GM12878 (cell line): ENCODE measurements at regions of chr16 and their contacts with region 1.

Region 1: GRCh38 chr16:84617791-84618580 is at the start of gene COTL1:
- DNase-seq: no peak
- ATAC-seq: peak; percentile 76
- H3K4me3 ChIP-seq: peak within 1 kb of the TSS; percentile 99
- H3K27ac ChIP-seq: peak within 1 kb of the TSS; percentile 78
- H3K4me1 ChIP-seq: peaks cover 42% of the 10 kb centered on the region
- H3K27me3 ChIP-seq: no peaks in the 10 kb centered on the region
- CTCF ChIP-seq: no peak
- EP300 ChIP-seq: no peak
- POLR2A ChIP-seq: peak; percentile 85
- RAD21 ChIP-seq: no peak
- polyA plus RNA-seq, gene COTL1: 140 to 235 TPM

Region 2: DNA sequence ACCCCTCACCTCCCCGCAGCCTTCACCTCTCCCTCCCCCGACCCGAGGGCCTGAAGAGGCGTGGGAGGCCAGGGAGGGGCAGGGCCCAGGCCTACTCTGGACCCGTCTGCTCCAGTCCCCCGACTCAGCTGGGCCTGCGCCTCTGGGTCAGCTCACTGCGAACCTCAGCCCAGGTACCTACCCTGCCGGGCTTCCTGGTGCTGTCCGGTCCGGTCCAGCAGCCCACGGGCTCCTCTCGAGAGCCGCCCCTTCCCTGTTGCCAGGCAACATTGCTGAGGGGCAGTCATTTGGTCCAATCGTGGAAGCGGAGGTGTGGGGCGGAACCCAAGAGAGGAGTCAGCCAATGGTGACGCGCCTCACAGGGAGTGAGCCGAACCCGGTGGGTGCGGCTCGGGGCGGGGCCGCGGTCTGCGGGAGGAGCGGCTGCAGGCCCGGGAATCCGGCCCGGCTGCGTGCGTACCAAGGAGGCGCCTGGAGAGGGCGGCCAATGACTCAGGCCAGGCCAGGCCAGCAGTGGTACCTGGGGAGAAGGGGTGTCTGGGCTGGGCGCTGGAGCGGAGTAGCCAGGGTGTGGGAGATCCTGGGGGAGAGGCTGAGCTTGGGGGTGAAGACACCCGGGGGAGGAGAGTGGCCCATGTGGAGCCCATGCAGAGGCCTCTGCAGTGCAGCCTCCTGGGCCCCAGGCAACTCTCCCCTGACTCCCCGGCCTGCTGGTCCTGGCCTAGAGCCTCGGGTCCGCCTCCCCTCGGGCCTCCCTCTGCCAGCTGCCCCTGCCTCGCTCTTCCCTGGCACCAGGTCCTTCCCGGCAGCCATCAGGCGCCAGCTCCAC is 113.4 kb before region 1 on chr16 and contains the start of gene MEAK7:
- CTCF ChIA-PET with region 1: interaction called, 299 read pairs
- POLR2A ChIA-PET with region 1: interaction called, 5 read pairs
- RAD21 ChIA-PET with region 1: interaction called, 43 read pairs
- SMC1A ChIA-PET with region 1: interaction called, 47 read pairs
- in situ Hi-C with region 1: no loop called
- intact Hi-C with region 1: no loop called
- DNase-seq: peak; percentile 86
- ATAC-seq: peak; percentile 91
- H3K4me3 ChIP-seq: peak within 1 kb of the TSS; percentile 88
- H3K27ac ChIP-seq: peak within 1 kb of the TSS; percentile 82
- H3K4me1 ChIP-seq: peaks cover 50% of the 10 kb centered on the region
- H3K27me3 ChIP-seq: no peaks in the 10 kb centered on the region
- CTCF ChIP-seq: peak in 1 of 3 experiments; percentile 13; a peak in 1 of 6 replicates
- EP300 ChIP-seq: no peak
- POLR2A ChIP-seq: peak; percentile 78
- RAD21 ChIP-seq: no peak
- polyA plus RNA-seq, gene MEAK7: 1.4 to 1.5 TPM

Region 3: DNA sequence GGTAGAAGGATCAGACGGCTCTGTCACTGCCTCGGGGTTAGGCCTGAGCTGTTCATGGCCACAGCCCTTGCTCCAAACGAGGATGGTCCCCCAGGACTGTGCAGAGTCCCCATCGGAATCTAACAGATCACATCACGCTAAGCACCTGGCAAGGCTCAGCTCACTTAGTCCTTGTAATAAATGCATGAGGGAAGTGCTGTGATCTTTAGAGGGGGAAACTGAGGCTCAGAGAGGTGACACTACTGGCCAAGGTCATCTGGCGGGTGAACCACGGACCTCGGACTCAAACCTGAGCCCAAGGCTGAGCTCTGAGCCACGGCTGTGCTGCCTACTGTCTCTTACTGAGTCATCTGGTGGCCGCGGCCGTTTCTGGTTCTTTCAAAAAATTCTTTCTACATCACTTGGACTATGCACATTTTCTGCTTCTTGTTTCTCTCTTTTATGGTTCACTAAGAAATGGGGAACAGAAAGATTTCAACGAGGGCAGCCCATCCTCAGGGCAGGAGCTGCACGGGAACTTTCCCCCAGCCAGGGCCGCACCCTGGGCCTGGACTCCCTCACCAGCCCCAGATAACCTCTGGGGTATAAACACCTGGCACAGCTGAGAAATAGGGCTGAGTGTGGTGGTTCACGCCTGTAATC is 55.7 kb before region 1 on chr16:
- CTCF ChIA-PET with region 1: interaction called, 11 read pairs
- POLR2A ChIA-PET with region 1: interaction called, 3 read pairs
- RAD21 ChIA-PET with region 1: interaction called, 6 read pairs
- SMC1A ChIA-PET with region 1: interaction called, 5 read pairs
- in situ Hi-C with region 1: no loop called
- intact Hi-C with region 1: no loop called
- DNase-seq: peak; percentile 64
- ATAC-seq: peak; percentile 92
- H3K4me3 ChIP-seq: no peak overlapping the region
- H3K27ac ChIP-seq: peak overlapping the region; percentile 66
- H3K4me1 ChIP-seq: peaks cover 21% of the 10 kb centered on the region
- H3K27me3 ChIP-seq: no peaks in the 10 kb centered on the region
- CTCF ChIP-seq: no peak
- EP300 ChIP-seq: peak in 1 of 2 experiments; percentile 6; a peak in 1 of 4 replicates
- POLR2A ChIP-seq: no peak; the same call in 1 of the 2 replicates
- RAD21 ChIP-seq: no peak

Region 4: DNA sequence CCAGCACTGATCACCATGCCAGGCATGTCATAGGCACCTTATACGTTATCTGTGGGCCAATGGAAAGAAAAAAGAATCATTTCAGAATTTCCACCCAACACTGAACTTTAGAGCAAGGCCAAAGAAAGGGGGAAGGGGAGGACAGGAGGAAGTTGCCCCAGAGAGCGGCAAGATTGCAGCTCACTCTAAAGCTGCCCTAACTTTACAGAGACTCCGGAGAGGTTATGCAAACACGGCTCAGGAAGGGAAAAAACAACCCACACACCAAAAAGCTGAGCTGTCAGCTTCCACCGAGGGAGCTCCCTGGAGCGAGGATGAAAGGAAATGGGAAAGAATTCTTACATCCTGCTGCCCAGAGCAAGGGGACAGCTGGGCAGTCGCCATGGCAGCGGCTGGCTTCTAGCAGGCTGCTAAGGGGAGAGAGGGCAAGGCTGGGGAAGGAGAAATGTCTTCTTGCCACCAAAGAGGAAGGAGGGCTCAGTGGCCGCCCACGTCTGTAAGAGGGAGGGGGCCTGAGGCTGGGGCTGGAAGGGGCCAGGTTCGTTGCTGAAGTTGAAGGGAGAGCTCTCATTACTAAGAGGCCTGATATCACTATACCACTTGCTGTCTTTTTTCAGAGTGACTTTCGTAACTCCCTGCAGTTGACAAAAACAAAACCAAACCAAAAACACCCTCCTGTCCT is 18.3 kb before region 1 on chr16:
- CTCF ChIA-PET with region 1: interaction called, 42 read pairs
- POLR2A ChIA-PET with region 1: interaction called, 214 read pairs
- RAD21 ChIA-PET with region 1: interaction called, 224 read pairs
- SMC1A ChIA-PET with region 1: interaction called, 229 read pairs
- in situ Hi-C with region 1: no loop called
- intact Hi-C with region 1: loop called (anchors 1 kb)
- DNase-seq: no peak
- ATAC-seq: peak; percentile 35
- H3K4me3 ChIP-seq: peak overlapping the region; percentile 69
- H3K27ac ChIP-seq: peak overlapping the region; percentile 100
- H3K4me1 ChIP-seq: peaks cover 79% of the 10 kb centered on the region
- H3K27me3 ChIP-seq: no peaks in the 10 kb centered on the region
- CTCF ChIP-seq: no peak
- EP300 ChIP-seq: peak in 1 of 2 experiments; percentile 18; a peak in 1 of 4 replicates
- POLR2A ChIP-seq: peak; percentile 64
- RAD21 ChIP-seq: no peak

Region 5: GRCh38 chr16:84672276-84673202 is 54.6 kb after region 1 on chr16:
- CTCF ChIA-PET with region 1: interaction called, 12 read pairs
- POLR2A ChIA-PET with region 1: no interaction called
- RAD21 ChIA-PET with region 1: interaction called, 9 read pairs
- SMC1A ChIA-PET with region 1: interaction called, 6 read pairs
- in situ Hi-C with region 1: no loop called
- intact Hi-C with region 1: no loop called
- DNase-seq: no peak
- ATAC-seq: peak; percentile 98
- H3K4me3 ChIP-seq: no peak overlapping the region
- H3K27ac ChIP-seq: no peak overlapping the region
- H3K4me1 ChIP-seq: no peaks in the 10 kb centered on the region
- H3K27me3 ChIP-seq: no peaks in the 10 kb centered on the region
- CTCF ChIP-seq: peak; percentile 86 to 95 (median 93)
- EP300 ChIP-seq: no peak
- POLR2A ChIP-seq: no peak
- RAD21 ChIP-seq: peak; percentile 74

Region 6: GRCh38 chr16:84754353-84754856 is 136.4 kb after region 1 on chr16:
- CTCF ChIA-PET with region 1: interaction called, 35 read pairs
- POLR2A ChIA-PET with region 1: interaction called, 3 read pairs
- RAD21 ChIA-PET with region 1: interaction called, 6 read pairs
- SMC1A ChIA-PET with region 1: interaction called, 24 read pairs
- in situ Hi-C with region 1: no loop called
- intact Hi-C with region 1: no loop called
- DNase-seq: peak; percentile 78
- ATAC-seq: peak; percentile 82
- H3K4me3 ChIP-seq: no peak overlapping the region; the same call in 1 of the 2 replicates
- H3K27ac ChIP-seq: peak overlapping the region; percentile 56
- H3K4me1 ChIP-seq: peaks cover 54% of the 10 kb centered on the region
- H3K27me3 ChIP-seq: no peaks in the 10 kb centered on the region
- CTCF ChIP-seq: peak; percentile 70 to 85 (median 80)
- EP300 ChIP-seq: no peak
- POLR2A ChIP-seq: no peak
- RAD21 ChIP-seq: peak; percentile 81

Region 7: GRCh38 chr16:85554112-85554813 is 936.3 kb after region 1 on chr16:
- CTCF ChIA-PET with region 1: no interaction called
- POLR2A ChIA-PET with region 1: no interaction called
- RAD21 ChIA-PET with region 1: no interaction called
- SMC1A ChIA-PET with region 1: no interaction called
- in situ Hi-C with region 1: loop called (anchors 25 kb)
- intact Hi-C with region 1: no loop called
- DNase-seq: peak; percentile 85
- ATAC-seq: peak; percentile 76
- H3K4me3 ChIP-seq: peak overlapping the region; percentile 95
- H3K27ac ChIP-seq: peak overlapping the region; percentile 97
- H3K4me1 ChIP-seq: peaks cover 13% of the 10 kb centered on the region
- H3K27me3 ChIP-seq: no peaks in the 10 kb centered on the region
- CTCF ChIP-seq: no peak
- EP300 ChIP-seq: peak; percentile 65 to 78; a peak in 3 of 4 replicates
- POLR2A ChIP-seq: peak; percentile 72
- RAD21 ChIP-seq: no peak